Heart left ventricle (tissue), 16 donors: ENCODE measurements at regions of chr11 and their contacts with region 1.

Region 1: DNA sequence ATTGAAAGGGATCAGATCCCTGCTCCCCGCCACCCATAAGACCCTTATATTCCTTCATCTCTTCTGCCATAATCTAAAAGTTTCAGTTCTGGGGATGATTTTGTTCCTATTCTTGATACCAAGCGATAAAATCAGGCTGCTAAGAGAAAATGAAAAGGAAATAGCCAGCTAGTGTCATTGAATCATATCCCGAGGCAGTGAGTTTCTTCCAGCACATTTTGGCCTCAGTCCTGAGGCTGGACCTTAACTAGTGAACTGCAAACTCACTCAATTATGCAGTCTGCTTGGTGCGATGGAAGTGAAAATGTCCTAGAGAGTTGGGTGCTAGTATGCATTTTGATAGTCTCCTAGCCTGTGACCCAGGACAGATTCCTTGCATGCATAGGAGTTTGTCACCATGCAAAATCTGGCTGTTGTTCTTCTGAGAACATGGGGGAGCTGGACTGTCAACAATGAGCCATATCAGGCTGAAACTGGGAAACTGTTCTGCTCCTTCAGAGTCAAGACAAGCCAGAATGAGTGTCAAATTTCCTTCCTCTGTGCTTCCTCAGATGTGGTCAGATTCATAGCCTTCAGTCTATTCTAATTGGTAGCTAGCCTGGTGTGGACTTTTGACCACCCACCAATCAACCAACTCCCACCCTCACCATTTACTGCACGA is 102.9 kb downstream of the CCDC81 start:
- DNase-seq: peak in 1 of 5 donors; percentile 33
- ATAC-seq: peak in 1 of 4 donors; percentile 33
- H3K4me3 ChIP-seq: no peak overlapping the region
- H3K27ac ChIP-seq: peak overlapping the region in 10 of 12 donors; percentile 0 to 94 (median 66)
- H3K4me1 ChIP-seq: peaks cover 3 to 69% (median 51%) of the 10 kb centered on the region in 12 donors
- H3K27me3 ChIP-seq: no peaks in the 10 kb centered on the region
- CTCF ChIP-seq: no peak
- POLR2A ChIP-seq: no peak

Region 2: GRCh38 chr11:86511086-86511551 is 33.5 kb after region 1 on chr11:
- intact Hi-C with region 1: loop called in 1 of 10 experiments (anchors 5 kb)
- DNase-seq: no peak
- ATAC-seq: peak in 2 of 4 donors; percentile 65 to 68
- H3K4me3 ChIP-seq: no peak overlapping the region
- H3K27ac ChIP-seq: no peak overlapping the region
- H3K4me1 ChIP-seq: peaks cover 0 to 33% (median 16%) of the 10 kb centered on the region in 12 donors
- H3K27me3 ChIP-seq: no peaks in the 10 kb centered on the region
- CTCF ChIP-seq: no peak
- POLR2A ChIP-seq: no peak

Region 3: DNA sequence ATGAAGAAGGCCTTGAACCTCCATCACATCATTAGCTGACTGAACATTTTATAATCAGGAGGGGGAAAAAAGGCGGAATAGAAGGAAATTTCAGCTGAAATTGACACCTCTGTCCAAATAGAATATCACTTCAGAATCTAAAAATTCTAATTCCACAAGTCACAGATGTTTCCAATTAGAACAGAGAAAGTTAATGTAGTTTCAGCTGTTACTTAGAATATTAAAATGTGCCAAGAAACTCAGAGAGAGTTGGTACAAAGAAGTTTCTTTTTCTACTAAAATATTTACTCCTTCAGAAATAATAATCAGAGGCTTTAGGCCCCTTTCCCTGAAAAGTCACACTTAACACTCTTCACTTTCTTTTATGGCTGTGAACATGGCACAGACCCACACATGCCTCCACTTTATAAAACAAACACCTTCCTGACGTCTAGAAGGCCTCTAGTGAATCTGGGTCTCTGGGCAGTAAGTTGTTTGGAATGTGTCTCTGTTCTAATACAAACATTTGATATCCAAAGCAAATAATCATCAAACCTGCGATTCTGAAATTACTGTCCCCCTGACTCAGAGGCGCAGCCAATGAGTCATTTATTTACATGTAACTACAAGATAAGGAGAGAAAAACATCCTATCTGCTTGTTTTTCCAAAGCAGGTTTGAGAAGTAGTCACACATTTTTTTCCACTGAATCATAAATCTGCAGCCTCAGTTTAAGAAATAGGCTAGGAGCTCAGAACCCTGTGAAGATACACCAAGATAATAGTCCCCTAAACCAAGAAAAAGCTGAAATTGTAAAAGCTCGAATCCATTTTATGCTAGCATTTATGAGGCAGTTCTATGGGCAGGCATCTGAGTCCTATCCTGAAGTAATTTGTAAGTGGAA is 46.4 kb after region 1 on chr11:
- intact Hi-C with region 1: loop called in 1 of 10 experiments (anchors 5 kb)
- DNase-seq: no peak
- ATAC-seq: peak; percentile 38 to 85 (median 48)
- H3K4me3 ChIP-seq: no peak overlapping the region
- H3K27ac ChIP-seq: peak overlapping the region in 9 of 12 donors; percentile 0 to 55 (median 27)
- H3K4me1 ChIP-seq: peaks cover 0 to 37% (median 20%) of the 10 kb centered on the region in 12 donors
- H3K27me3 ChIP-seq: no peaks in the 10 kb centered on the region
- CTCF ChIP-seq: no peak
- POLR2A ChIP-seq: no peak

Region 4: GRCh38 chr11:86551286-86552092 is 73.9 kb after region 1 on chr11:
- intact Hi-C with region 1: loop called in 4 of 10 experiments (anchors 5 to 10 kb)
- DNase-seq: peak in 1 of 5 donors; percentile 33
- ATAC-seq: peak; percentile 24 to 68 (median 59)
- H3K4me3 ChIP-seq: no peak overlapping the region
- H3K27ac ChIP-seq: peak overlapping the region; percentile 51 to 89 (median 66)
- H3K4me1 ChIP-seq: peaks cover 5 to 58% (median 33%) of the 10 kb centered on the region in 12 donors
- H3K27me3 ChIP-seq: no peaks in the 10 kb centered on the region
- CTCF ChIP-seq: no peak
- POLR2A ChIP-seq: peak in 1 of 2 donors; percentile 24

Region 5: GRCh38 chr11:86559311-86559945 is 81.8 kb after region 1 on chr11:
- intact Hi-C with region 1: loop called in 5 of 10 experiments (anchors 2 to 10 kb)
- DNase-seq: peak in 4 of 5 donors; percentile 48 to 80 (median 55)
- ATAC-seq: peak; percentile 76 to 86 (median 82)
- H3K4me3 ChIP-seq: no peak overlapping the region
- H3K27ac ChIP-seq: peak overlapping the region; percentile 64 to 91 (median 80)
- H3K4me1 ChIP-seq: peaks cover 7 to 37% (median 27%) of the 10 kb centered on the region in 12 donors
- H3K27me3 ChIP-seq: no peaks in the 10 kb centered on the region
- CTCF ChIP-seq: no peak
- POLR2A ChIP-seq: no peak

Region 6: GRCh38 chr11:86577663-86578636 is 100.3 kb after region 1 on chr11:
- intact Hi-C with region 1: loop called in 1 of 10 experiments (anchors 5 kb)
- DNase-seq: peak; percentile 54 to 86 (median 75)
- ATAC-seq: peak; percentile 74 to 94 (median 88)
- H3K4me3 ChIP-seq: no peak overlapping the region
- H3K27ac ChIP-seq: peak overlapping the region in 10 of 12 donors; percentile 35 to 80 (median 51)
- H3K4me1 ChIP-seq: peaks cover 4 to 55% (median 29%) of the 10 kb centered on the region in 12 donors
- H3K27me3 ChIP-seq: no peaks in the 10 kb centered on the region
- CTCF ChIP-seq: no peak
- POLR2A ChIP-seq: no peak